ENCODE measurements at regions of chr1 and their contacts with region 1.

Region 1: DNA sequence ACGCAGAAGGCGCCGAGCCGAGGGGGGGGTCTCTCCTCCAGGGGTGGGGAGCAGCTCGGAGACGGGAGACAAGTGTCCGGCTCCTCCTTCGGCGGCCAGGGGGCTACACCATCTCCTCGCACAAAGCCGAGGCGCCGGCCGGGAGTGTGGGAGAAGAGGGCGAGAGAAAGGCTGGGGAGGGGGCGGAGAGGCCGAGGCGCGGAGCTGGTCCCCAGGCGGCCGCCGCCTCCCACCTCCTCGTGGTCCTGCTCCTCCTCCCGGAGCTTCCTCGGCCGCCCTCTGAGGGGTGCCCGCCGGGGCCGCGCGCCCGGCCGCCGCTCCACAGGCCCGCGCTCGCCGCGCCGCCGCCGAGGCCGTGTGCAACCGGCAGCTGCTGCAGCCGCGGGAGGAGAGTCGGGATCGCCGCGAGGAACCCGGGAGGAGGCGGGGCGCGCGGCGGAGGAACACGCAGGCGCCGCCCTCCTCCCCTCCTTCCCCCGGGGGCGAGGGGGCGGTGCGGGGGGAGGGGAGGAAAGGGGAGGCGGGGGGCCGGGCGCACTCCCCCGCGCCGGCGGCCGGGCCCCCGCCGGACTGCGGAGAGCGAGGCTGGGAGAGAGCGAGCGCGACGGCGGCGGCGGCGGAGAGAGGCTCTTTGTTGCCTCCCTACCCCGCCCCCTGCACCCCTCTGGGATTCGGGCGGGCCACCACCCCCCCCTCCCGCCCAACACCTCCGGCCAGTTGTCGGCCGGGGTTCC is at the start of gene ENAH:
- DNase-seq: no peak
- ATAC-seq: peak; percentile 85
- H3K4me3 ChIP-seq: peak within 1 kb of the TSS; percentile 89 to 100
- H3K27ac ChIP-seq: peak within 1 kb of the TSS; percentile 99
- H3K4me1 ChIP-seq: peaks cover 55% of the 10 kb centered on the region
- H3K27me3 ChIP-seq: no peaks in the 10 kb centered on the region
- CTCF ChIP-seq: no peak
- total RNA-seq, gene ENAH: 133 TPM

Region 2: DNA sequence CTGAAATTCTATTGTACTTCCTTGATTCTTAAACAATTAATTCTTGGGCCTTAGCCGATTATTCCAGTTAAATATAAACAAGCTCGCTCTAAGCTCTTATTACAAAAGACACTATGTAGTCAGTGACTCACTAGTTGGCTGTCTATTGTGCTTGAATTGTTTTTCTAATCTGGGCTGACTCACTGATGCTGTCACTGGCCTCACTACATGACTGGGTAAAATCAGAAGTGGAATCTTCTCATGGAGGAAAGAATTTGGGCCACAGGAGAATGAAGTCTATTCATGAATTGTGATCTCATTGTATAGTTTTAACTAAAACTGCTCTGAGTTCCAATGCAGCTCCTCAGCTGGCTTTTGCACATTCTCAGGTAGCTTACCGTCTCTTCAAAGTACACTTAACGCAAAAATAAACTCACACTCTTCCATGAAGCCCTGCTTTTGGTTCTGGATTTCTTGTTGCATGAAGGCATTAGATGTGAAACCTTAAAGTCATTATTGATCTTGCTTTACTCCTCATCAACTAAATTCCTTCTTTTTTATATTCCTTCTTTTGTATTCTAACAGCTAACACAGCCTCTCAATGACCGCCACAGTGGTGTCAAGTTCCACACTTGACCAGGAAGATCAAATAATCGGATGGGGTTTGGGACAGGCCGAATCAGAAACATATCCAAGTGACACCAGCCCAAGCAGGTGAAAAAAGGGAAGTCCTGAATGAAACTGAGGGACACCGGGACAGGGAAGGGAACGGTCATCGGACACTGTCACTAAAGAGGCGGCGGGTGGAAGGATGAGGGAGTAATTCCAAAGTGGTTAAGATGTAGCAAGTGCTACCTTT is 144.1 kb before region 1 on chr1:
- CTCF ChIA-PET with region 1: no interaction called
- POLR2A ChIA-PET with region 1: interaction called, 13 read pairs
- in situ Hi-C with region 1: no loop called
- intact Hi-C with region 1: loop called (anchors 10 kb)
- DNase-seq: peak; percentile 95
- ATAC-seq: peak; percentile 99
- H3K4me3 ChIP-seq: no peak overlapping the region
- H3K27ac ChIP-seq: peak overlapping the region; percentile 17; the same call in 1 of the 2 replicates
- H3K4me1 ChIP-seq: peaks cover 16% of the 10 kb centered on the region; the same call in 1 of the 2 replicates
- H3K27me3 ChIP-seq: no peaks in the 10 kb centered on the region
- CTCF ChIP-seq: no peak

Region 3: DNA sequence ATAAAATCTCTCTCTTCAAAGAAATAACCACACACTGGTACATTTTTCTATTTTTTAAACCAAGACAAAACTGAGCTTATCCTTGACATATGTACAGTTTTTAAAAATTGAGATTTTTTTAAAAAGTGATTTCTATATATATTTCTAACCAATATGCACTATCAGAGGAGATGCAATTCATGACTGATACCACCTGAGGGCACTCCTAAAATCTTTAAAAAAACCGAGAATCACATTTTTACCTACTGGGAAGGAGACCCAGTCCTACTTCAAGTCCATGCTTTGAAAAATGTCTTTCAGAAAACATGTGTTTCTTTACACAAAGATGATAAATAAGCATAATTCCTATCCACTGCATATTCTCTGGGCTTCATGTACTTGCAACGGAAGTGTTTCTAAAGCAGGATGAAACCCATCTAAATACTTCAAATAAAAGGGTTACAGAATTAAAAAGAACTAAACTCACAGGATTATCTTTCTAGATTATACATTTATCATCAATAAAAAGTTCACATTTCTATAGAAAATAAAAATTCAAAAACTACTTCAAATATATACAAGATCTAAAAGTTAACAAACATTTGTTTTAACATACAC is 98.6 kb before region 1 on chr1:
- CTCF ChIA-PET with region 1: no interaction called
- POLR2A ChIA-PET with region 1: interaction called, 3 read pairs
- in situ Hi-C with region 1: no loop called
- intact Hi-C with region 1: loop called (anchors 10 kb)
- DNase-seq: no peak
- ATAC-seq: no peak
- H3K4me3 ChIP-seq: no peak overlapping the region
- H3K27ac ChIP-seq: no peak overlapping the region
- H3K4me1 ChIP-seq: no peaks in the 10 kb centered on the region
- H3K27me3 ChIP-seq: no peaks in the 10 kb centered on the region
- CTCF ChIP-seq: peak; percentile 64; the same call in 1 of the 2 replicates

Region 4: GRCh38 chr1:225567590-225568194 is 85.2 kb before region 1 on chr1:
- CTCF ChIA-PET with region 1: interaction called, 11 read pairs
- POLR2A ChIA-PET with region 1: no interaction called
- in situ Hi-C with region 1: no loop called
- intact Hi-C with region 1: no loop called
- DNase-seq: no peak
- ATAC-seq: no peak
- H3K4me3 ChIP-seq: no peak overlapping the region
- H3K27ac ChIP-seq: no peak overlapping the region
- H3K4me1 ChIP-seq: no peaks in the 10 kb centered on the region
- H3K27me3 ChIP-seq: no peaks in the 10 kb centered on the region
- CTCF ChIP-seq: peak; percentile 37; the same call in 1 of the 2 replicates

Region 5: DNA sequence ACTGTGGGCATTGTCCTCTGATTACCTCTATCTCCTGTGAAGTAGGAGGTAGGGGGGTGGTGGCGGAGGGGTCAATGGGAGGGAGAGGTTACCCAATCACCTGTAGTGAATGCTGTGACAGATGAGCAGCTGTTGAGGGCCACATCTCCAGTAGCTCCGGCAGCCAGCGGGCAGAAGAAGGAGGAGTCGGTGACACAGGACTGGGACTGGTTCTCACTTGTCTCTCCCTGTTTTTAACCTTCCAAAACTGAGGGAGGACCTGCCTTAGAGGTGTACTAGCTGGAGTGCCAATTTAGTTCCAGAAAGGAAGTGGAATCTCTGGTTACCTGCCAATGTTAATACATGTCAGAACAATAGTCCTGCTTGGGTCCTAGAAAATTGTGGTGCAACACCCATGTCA is 56.2 kb after region 1 on chr1:
- CTCF ChIA-PET with region 1: no interaction called
- POLR2A ChIA-PET with region 1: no interaction called
- in situ Hi-C with region 1: no loop called
- intact Hi-C with region 1: no loop called
- DNase-seq: no peak
- ATAC-seq: no peak
- H3K4me3 ChIP-seq: no peak overlapping the region
- H3K27ac ChIP-seq: no peak overlapping the region
- H3K4me1 ChIP-seq: no peaks in the 10 kb centered on the region
- H3K27me3 ChIP-seq: no peaks in the 10 kb centered on the region
- CTCF ChIP-seq: no peak

Region 6: GRCh38 chr1:225772323-225772768 is 119.5 kb after region 1 on chr1:
- CTCF ChIA-PET with region 1: interaction called, 6 read pairs
- POLR2A ChIA-PET with region 1: interaction called, 3 read pairs
- in situ Hi-C with region 1: no loop called
- intact Hi-C with region 1: loop called (anchors 1 kb)
- DNase-seq: peak; percentile 78
- ATAC-seq: peak; percentile 94
- H3K4me3 ChIP-seq: no peak overlapping the region
- H3K27ac ChIP-seq: peak overlapping the region; percentile 71
- H3K4me1 ChIP-seq: peaks cover 38% of the 10 kb centered on the region
- H3K27me3 ChIP-seq: no peaks in the 10 kb centered on the region
- CTCF ChIP-seq: peak; percentile 93

Region 7: DNA sequence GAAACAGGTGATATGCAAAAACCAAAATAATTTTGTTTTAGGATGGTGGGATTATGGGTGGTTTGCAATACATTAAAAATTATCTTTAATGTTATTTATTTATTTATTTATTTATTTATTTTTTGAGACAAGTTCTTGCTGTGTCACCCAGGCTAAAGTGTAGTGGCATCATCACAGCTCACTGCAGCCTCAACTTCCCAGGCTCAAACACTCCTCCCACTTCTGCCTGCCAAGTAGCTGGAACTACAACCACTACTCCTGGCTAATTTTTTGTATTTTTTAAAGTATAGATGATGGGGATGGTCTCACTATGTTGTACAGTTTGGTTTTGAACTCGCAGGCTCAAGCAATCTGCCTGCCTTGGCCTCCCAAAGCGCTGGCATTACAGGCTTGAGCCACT is 277.7 kb after region 1 on chr1:
- CTCF ChIA-PET with region 1: interaction called, 11 read pairs
- POLR2A ChIA-PET with region 1: no interaction called
- in situ Hi-C with region 1: no loop called
- intact Hi-C with region 1: no loop called
- DNase-seq: no peak
- ATAC-seq: no peak
- H3K4me3 ChIP-seq: no peak overlapping the region
- H3K27ac ChIP-seq: no peak overlapping the region
- H3K4me1 ChIP-seq: no peaks in the 10 kb centered on the region
- H3K27me3 ChIP-seq: no peaks in the 10 kb centered on the region
- CTCF ChIP-seq: no peak

Region 8: DNA sequence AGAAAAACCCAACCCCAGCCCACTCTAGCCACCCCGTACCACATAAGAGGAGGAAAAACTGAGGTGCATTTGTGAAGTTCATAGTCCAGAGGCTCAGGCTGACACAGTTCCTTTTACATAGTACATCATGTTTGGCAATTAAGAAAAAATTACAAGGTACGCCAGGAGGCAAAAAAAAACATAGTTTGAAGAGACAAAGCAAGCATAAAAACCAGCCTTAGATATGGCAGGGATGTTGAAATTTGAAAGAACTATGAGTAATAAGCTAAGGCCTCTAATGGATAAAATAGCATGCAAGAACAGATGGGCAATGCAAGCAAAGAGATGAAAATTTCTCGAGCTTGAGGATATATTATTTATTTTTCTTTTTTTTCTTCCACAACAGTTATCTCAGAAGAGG is 602.5 kb after region 1 on chr1:
- CTCF ChIA-PET with region 1: no interaction called
- POLR2A ChIA-PET with region 1: interaction called, 12 read pairs
- in situ Hi-C with region 1: no loop called
- intact Hi-C with region 1: no loop called
- DNase-seq: no peak
- ATAC-seq: no peak
- H3K4me3 ChIP-seq: no peak overlapping the region
- H3K27ac ChIP-seq: no peak overlapping the region
- H3K4me1 ChIP-seq: no peaks in the 10 kb centered on the region
- H3K27me3 ChIP-seq: no peaks in the 10 kb centered on the region
- CTCF ChIP-seq: no peak